ENCODE measurements at regions of chr19 and their contacts with region 1.

Region 1: GRCh38 chr19:34633802-34634201 is 43.2 kb downstream of the SCGB2B2 start:
- DNase-seq: no peak
- H3K4me3 ChIP-seq: no peak overlapping the region
- H3K27ac ChIP-seq: no peak overlapping the region
- H3K4me1 ChIP-seq: no peaks in the 10 kb centered on the region
- H3K27me3 ChIP-seq: no peaks in the 10 kb centered on the region
- CTCF ChIP-seq: no peak

Region 2: GRCh38 chr19:34574704-34575103 is 59.1 kb before region 1 on chr19:
- CTCF ChIA-PET with region 1: no interaction called
- dilution Hi-C with region 1: loop called (anchors 5 kb)
- in situ Hi-C with region 1: no loop called
- intact Hi-C with region 1: no loop called
- DNase-seq: no peak
- H3K4me3 ChIP-seq: no peak overlapping the region
- H3K27ac ChIP-seq: no peak overlapping the region
- H3K4me1 ChIP-seq: no peaks in the 10 kb centered on the region
- H3K27me3 ChIP-seq: no peaks in the 10 kb centered on the region
- CTCF ChIP-seq: no peak